Naive thymus-derived CD4-positive, alpha-beta T cell (primary cell): ENCODE measurements at regions of chr10 and their contacts with region 1.

Region 1: DNA sequence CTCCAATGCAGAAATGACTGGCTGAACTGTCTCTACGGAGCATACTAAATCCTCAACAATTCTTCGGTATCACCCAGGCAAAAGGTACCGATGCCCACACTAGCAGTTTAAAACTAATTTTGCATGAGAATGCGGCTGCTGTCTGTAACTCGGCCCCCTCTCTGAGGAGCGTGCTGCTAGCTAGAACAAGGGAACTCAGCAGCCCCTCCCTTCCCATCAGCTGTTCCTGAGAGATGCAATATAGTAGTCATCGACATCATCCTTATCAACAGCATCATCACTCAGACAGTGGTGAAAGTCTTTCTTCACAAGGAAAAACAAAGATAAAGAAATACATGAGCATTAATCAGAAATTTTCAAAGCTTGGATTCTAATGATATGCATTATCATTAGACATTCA is 189.1 kb upstream of the FRMD4A start:
- DNase-seq: no peak
- ATAC-seq: no peak
- H3K4me3 ChIP-seq: no peak overlapping the region
- H3K4me3 Mint-ChIP-seq: no peak overlapping the region
- H3K27ac ChIP-seq: no peak overlapping the region
- H3K27ac Mint-ChIP-seq: peak overlapping the region in 6 of 9 donors; percentile 36 to 62 (median 49)
- H3K4me1 ChIP-seq: no peaks in the 10 kb centered on the region
- H3K4me1 Mint-ChIP-seq: peaks cover 5 to 26% (median 18%) of the 10 kb centered on the region in 7 donors
- H3K27me3 ChIP-seq: no peaks in the 10 kb centered on the region
- H3K27me3 Mint-ChIP-seq: no peaks in the 10 kb centered on the region

Region 2: GRCh38 chr10:14093730-14094484 is 425.9 kb before region 1 on chr10:
- CTCF ChIA-PET with region 1: no interaction called
- POLR2A ChIA-PET with region 1: no interaction called
- intact Hi-C with region 1: no loop called
- DNase-seq: peak in 4 of 9 donors; percentile 6 to 13 (median 12)
- ATAC-seq: no peak
- H3K4me3 ChIP-seq: no peak overlapping the region
- H3K4me3 Mint-ChIP-seq: no peak overlapping the region
- H3K27ac ChIP-seq: no peak overlapping the region
- H3K27ac Mint-ChIP-seq: peak overlapping the region in 1 of 9 donors; percentile 20
- H3K4me1 ChIP-seq: no peaks in the 10 kb centered on the region
- H3K4me1 Mint-ChIP-seq: peaks cover 0 to 13% (median 4%) of the 10 kb centered on the region in 7 donors
- H3K27me3 ChIP-seq: no peaks in the 10 kb centered on the region
- H3K27me3 Mint-ChIP-seq: no peaks in the 10 kb centered on the region

Region 3: GRCh38 chr10:14325325-14325955 is 194.3 kb before region 1 on chr10:
- CTCF ChIA-PET with region 1: no interaction called
- POLR2A ChIA-PET with region 1: no interaction called
- intact Hi-C with region 1: no loop called
- DNase-seq: peak in 7 of 9 donors; percentile 17 to 33 (median 28)
- ATAC-seq: peak; percentile 29
- H3K4me3 ChIP-seq: no peak overlapping the region
- H3K4me3 Mint-ChIP-seq: no peak overlapping the region
- H3K27ac ChIP-seq: no peak overlapping the region
- H3K27ac Mint-ChIP-seq: no peak overlapping the region
- H3K4me1 ChIP-seq: no peaks in the 10 kb centered on the region
- H3K4me1 Mint-ChIP-seq: peaks cover 0 to 1% (median 0%) of the 10 kb centered on the region in 7 donors
- H3K27me3 ChIP-seq: peaks cover 0 to under 1% of the 10 kb centered on the region in 2 donors
- H3K27me3 Mint-ChIP-seq: peaks cover 24 to 39% (median 29%) of the 10 kb centered on the region in 5 donors

Region 4: DNA sequence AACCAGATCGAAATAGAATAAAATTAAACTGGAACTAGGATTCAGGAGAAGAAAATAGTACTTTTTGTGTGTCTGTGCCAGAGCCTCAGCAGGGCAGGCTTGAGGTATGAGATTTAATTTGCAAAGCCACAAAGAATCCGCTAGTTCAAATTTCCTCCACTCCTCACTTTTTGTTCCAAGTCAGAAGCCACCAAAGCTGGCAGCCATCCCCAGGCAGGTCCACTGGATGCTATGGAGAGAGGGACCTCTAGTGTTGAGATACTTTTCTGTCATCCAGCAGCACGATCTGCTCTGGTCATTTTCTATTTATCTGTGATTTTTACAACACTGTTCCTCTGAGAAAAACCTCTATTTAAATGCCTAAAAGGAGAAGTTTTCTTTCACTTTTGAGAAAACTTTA is 41.2 kb before region 1 on chr10:
- CTCF ChIA-PET with region 1: no interaction called
- POLR2A ChIA-PET with region 1: no interaction called
- intact Hi-C with region 1: no loop called
- DNase-seq: no peak
- ATAC-seq: no peak
- H3K4me3 ChIP-seq: no peak overlapping the region
- H3K4me3 Mint-ChIP-seq: no peak overlapping the region
- H3K27ac ChIP-seq: no peak overlapping the region
- H3K27ac Mint-ChIP-seq: no peak overlapping the region
- H3K4me1 ChIP-seq: no peaks in the 10 kb centered on the region
- H3K4me1 Mint-ChIP-seq: no peaks in the 10 kb centered on the region
- H3K27me3 ChIP-seq: no peaks in the 10 kb centered on the region
- H3K27me3 Mint-ChIP-seq: peaks cover 6 to 46% (median 16%) of the 10 kb centered on the region in 5 donors

Region 5: DNA sequence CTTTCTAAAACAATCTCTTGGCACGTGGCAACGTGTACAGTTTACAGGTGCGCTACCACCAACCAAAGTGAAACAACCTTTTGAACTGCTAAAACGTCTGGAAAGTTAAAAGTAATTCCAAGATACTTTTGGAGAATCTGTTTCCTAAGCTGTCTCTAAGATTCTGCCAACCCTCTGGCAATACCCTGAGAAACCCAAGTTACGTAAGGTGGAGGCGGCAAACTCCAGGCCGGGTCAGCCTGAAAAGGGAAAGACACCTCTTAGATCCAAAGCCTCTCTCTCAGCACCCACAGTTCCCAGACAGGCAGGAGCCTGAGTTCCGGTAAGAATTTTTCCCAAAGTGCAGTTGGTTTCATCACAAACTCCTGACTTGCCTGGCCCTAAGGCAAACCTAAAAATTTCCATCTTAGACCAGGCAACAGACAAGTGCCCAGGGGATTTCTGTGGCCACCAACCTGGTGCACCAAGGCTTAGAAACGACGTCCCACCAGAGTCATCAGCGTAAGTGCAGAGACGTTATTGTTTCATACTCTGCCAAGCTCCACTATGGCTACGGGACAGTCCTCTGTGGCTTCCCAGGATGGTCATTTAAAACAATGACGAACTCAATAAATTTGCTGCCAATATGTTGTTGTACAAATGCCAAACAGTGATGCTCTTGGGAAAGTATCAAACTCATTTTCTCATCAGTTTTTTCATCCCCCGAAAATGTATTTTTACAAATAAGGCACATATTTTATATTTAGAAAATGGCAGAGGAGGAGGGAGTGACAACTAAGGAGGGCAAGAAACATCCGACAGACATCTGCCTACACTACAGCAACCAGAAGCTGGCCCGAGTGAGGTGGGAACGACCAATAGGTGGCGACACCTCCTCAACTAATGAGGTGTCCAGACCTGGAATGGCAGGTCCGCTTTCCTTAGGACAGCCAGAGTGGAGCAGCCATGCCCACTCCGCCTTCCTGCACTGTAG is 16.7 kb after region 1 on chr10:
- CTCF ChIA-PET with region 1: no interaction called
- POLR2A ChIA-PET with region 1: no interaction called
- intact Hi-C with region 1: loop called in 1 of 2 experiments (anchors 2 kb)
- DNase-seq: peak in 3 of 9 donors; percentile 29 to 47 (median 31)
- ATAC-seq: peak; percentile 72
- H3K4me3 ChIP-seq: no peak overlapping the region
- H3K4me3 Mint-ChIP-seq: no peak overlapping the region
- H3K27ac ChIP-seq: no peak overlapping the region
- H3K27ac Mint-ChIP-seq: peak overlapping the region in 6 of 9 donors; percentile 31 to 83 (median 72)
- H3K4me1 ChIP-seq: peaks cover 4 to 31% of the 10 kb centered on the region in 2 donors
- H3K4me1 Mint-ChIP-seq: peaks cover 55 to 97% (median 90%) of the 10 kb centered on the region in 7 donors
- H3K27me3 ChIP-seq: no peaks in the 10 kb centered on the region
- H3K27me3 Mint-ChIP-seq: no peaks in the 10 kb centered on the region

Region 6: DNA sequence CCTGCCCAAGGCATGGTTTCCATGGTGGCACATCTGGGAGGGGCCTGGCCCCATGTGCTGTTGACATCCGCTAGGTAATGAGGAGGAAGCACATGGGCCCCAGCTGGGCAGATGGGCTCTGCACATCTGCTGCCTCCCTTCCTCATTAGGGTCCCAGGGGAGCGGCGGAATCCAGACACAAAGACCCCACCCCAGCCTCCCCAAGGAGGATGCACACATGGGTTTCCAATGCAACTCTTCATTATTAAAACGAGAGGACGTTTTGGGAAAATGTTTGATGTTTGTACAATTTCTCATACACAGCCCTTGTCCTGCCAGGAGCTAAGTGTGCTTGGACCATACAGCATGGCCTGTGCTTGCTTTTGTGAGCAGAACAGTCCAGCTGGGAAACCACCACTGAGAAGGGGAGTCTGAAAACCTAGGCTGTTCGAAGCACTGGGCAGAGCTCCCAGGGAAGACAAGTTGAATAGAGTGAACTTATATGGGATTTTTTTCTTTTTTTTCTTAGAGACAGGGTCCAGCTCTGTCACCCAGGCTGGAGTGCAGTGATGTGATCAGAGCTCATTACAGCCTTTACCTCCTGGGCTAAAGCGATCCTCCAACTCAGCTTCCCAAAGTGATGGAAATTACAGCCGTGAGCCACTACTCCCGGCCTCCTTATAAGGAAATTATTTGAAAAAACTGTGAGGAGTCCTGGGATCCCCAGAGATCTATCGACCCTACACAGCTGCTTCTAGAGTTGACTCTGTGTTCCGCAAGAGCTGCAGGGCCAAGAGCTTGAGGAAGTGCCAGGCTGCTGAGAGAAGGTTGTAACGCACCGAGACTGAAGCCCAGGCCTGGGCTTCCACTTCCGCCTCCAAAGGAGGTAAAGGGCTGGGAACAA is 231.5 kb after region 1 on chr10:
- CTCF ChIA-PET with region 1: no interaction called
- POLR2A ChIA-PET with region 1: no interaction called
- intact Hi-C with region 1: no loop called
- DNase-seq: no peak
- ATAC-seq: peak; percentile 40
- H3K4me3 ChIP-seq: no peak overlapping the region
- H3K4me3 Mint-ChIP-seq: no peak overlapping the region
- H3K27ac ChIP-seq: no peak overlapping the region
- H3K27ac Mint-ChIP-seq: peak overlapping the region in 1 of 9 donors; percentile 70
- H3K4me1 ChIP-seq: no peaks in the 10 kb centered on the region
- H3K4me1 Mint-ChIP-seq: no peaks in the 10 kb centered on the region
- H3K27me3 ChIP-seq: no peaks in the 10 kb centered on the region
- H3K27me3 Mint-ChIP-seq: no peaks in the 10 kb centered on the region